ENCODE measurements at regions of chr14 and their contacts with region 1.

Region 1: DNA sequence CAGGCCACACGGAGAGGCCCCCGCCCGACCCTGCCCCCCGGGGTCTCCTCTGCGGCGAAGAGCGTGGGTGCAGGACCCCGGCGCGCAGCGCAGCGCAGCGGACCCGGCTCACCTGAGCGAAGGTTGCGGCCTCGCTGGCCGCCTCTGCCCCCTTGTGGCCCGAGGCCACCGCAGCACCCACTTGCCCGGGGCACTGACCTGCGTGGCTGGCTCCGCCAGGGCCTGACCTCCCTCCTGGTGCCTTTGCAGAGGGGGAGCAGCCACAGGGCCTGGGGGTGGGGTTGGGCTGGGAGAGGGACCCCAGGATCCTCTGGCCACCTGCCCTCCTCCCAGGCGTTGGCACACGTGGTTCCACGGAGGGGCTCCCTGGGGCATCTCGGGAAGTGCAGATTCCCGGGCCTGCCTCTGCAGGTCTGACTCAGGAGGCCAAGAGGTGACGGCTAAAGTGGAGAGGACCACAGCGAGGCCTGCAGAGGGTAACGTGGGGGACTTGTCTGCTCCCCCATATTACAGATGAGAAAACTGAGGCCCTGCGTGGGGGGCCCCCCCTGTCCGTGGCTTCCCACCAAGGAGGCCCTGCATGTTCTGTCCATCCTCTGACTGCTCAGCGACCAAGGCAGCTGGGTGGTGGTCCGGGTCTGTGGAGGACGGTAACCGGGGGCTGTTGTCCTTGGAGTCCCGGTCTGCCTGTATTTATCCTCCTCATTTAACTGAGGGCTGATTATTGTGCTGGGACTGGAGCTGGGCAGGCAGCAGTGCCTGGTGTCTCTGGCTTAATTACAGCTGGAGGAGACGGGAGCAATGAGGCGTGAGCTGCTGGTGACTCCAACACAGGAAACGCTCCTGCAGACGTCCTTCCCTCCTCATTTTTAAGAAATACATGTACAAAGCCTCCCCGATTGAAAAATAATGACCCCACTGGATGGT is 67.9 kb upstream of the BEGAIN start:
- DNase-seq: peak; percentile 78
- CTCF ChIP-seq: peak; percentile 83

Region 2: GRCh38 chr14:99327063-99327843 is 1327.8 kb before region 1 on chr14:
- CTCF ChIA-PET with region 1: no interaction called
- POLR2A ChIA-PET with region 1: no interaction called
- DNase-seq: peak; percentile 13
- CTCF ChIP-seq: no peak

Region 3: DNA sequence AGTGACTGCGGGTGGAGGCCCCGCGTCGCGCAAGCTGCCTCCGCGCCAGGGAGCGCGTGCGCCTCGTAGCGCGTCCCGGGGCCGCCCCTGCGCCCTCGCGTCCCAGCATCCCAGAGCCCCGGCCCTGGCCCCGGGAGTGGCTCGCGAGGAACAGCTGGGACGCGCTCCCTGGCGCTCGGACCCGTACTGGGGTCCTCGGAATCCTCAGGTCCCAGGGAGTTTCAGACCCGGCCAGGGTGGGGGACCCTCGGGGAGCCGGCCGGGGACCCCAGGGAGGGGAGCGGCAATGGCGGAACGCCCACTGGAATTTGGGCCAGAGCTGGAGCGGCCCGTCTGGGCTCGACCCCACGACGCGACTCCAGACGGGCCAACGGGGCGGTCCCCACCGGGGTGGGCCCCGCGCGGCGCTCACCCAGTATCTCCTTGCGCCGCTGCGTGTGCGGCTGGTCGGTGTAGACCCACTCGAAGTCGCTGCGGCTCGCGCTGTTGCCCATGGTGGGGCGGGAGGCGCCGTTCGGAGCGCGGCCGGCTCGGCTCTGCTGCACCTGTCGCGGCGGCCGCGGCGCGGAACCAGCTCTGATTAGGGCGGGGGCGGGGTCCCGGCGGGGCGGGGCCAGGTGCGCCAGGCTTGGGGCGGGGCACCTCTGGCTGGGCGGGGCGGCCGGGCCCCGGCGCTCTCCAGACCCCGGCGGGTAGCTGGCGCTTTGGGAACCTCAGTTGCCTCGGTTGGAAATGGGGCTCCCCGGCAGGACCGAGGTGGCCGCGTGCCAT is 495.8 kb before region 1 on chr14 and contains the start of gene DEGS2:
- CTCF ChIA-PET with region 1: no interaction called
- POLR2A ChIA-PET with region 1: no interaction called
- DNase-seq: peak; percentile 84
- CTCF ChIP-seq: no peak

Region 4: DNA sequence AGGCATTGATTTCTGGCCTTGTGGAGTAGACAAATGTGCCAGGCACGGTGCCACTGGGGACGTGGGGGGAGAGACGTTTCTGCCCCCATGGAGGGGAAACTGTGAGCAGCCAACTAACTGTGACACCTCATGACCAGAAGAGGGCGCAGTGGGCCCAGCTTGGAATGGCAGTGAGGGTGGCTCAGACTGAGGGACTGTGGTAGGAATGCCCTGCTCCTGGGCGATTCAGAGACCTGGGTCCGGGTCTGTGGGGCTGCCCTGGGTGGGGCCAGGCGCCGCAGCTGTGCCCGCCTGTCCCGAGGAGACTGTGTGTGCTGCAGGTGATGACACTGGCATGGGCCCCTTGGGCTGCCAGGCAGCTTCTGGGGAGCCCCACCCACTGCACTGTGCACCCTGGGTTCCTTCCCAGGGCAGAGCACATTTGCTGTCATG is 271.3 kb before region 1 on chr14:
- CTCF ChIA-PET with region 1: interaction called, 71 read pairs
- POLR2A ChIA-PET with region 1: no interaction called
- DNase-seq: peak; percentile 83
- CTCF ChIP-seq: peak; percentile 91

Region 5: DNA sequence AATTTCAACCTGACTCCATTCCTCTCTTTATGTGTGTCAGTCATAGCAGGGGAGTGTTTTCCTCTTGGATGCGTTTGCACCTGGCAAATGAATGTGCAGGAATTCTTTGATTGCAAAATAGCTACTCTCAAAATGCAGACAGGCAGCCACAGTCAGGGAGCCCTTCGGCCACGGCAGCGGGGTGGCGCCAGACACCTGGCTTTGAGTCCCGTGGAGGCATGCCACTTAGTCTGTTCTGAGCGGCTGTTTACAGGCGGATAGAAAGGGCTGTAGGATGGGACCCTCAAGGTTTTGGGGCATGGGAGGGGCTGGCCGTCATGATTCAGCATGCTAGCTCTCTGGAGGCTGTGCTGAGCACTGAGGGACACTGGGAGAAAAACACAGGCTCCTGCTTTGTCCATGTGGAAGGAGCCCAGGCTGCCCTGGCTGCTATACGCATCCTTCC is 214.9 kb before region 1 on chr14:
- CTCF ChIA-PET with region 1: interaction called, 11 read pairs
- POLR2A ChIA-PET with region 1: no interaction called
- DNase-seq: peak; percentile 63
- CTCF ChIP-seq: peak; percentile 67

Measured in GM10248 (cell line).